H1 (cell line): ENCODE measurements at regions of chr16 and their contacts with region 1.

Region 1: DNA sequence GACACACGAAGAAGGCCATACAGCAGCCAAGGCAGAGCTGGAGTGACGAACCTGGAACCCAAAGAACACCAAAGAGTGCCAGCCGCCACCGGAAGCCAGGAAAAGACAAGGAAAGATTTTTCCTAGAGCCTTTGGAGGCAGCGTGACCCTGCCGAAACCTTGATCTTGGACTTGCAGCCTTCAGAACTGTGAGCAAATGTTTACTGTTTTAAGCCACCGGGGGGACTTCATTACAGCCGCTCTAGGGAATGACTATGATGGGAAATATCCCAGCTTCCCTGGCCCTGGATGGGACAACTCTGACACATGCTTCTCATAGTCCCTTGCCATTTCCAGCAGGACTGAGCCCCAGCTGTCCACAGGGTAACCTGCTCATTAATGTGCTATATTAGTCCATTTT is 270.6 kb downstream of the HAPSTR1 start:
- DNase-seq: no peak
- H3K4me3 ChIP-seq: no peak overlapping the region
- H3K27ac ChIP-seq: no peak overlapping the region
- H3K4me1 ChIP-seq: no peaks in the 10 kb centered on the region
- H3K27me3 ChIP-seq: no peaks in the 10 kb centered on the region
- CTCF ChIP-seq: peak in 2 of 3 experiments; percentile 14 to 51; a peak in 3 of 4 replicates
- EP300 ChIP-seq: no peak
- POLR2A ChIP-seq: no peak
- RAD21 ChIP-seq: peak; percentile 48 to 58; a peak in 3 of 4 replicates

Region 2: GRCh38 chr16:9372934-9373890 is 11.2 kb after region 1 on chr16:
- CTCF ChIA-PET with region 1: interaction called, 13 read pairs
- POLR2A ChIA-PET with region 1: no interaction called
- DNase-seq: no peak
- H3K4me3 ChIP-seq: no peak overlapping the region
- H3K27ac ChIP-seq: no peak overlapping the region
- H3K4me1 ChIP-seq: peaks cover 0 to 6% (median 0%) of the 10 kb centered on the region in 4 experiments; a peak in 2 of 7 replicates
- H3K27me3 ChIP-seq: no peaks in the 10 kb centered on the region
- CTCF ChIP-seq: peak; percentile 17 to 39 (median 30); a peak in 3 of 4 replicates
- EP300 ChIP-seq: no peak
- POLR2A ChIP-seq: no peak
- RAD21 ChIP-seq: peak; percentile 52 to 62

Region 3: DNA sequence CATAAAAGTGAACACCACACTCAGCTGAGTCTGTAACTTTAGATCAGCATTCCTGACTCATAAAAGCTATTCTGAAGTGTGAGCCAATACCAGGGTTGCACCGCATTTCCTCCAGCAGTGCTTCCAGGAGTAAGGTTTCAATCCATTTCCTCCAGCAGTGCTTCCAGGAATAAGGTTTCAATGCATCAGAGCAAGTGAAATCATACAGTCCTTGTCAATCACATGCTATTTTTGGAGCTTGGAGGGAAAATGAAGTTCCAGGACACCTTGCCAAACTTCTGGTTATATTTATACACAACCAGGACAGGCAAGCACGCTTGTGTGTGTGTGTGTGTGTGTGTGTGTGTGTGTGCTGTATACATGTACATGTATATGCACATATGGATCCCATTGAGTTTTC is 492.6 kb after region 1 on chr16:
- CTCF ChIA-PET with region 1: no interaction called
- POLR2A ChIA-PET with region 1: no interaction called
- DNase-seq: no peak
- H3K4me3 ChIP-seq: no peak overlapping the region
- H3K27ac ChIP-seq: no peak overlapping the region
- H3K4me1 ChIP-seq: no peaks in the 10 kb centered on the region; a peak in 1 of 7 replicates
- H3K27me3 ChIP-seq: no peaks in the 10 kb centered on the region
- CTCF ChIP-seq: no peak
- EP300 ChIP-seq: no peak
- POLR2A ChIP-seq: no peak
- RAD21 ChIP-seq: no peak